Sigmoid colon (tissue), 7 donors: ENCODE measurements at regions of chr3 and their contacts with region 1.

Region 1: DNA sequence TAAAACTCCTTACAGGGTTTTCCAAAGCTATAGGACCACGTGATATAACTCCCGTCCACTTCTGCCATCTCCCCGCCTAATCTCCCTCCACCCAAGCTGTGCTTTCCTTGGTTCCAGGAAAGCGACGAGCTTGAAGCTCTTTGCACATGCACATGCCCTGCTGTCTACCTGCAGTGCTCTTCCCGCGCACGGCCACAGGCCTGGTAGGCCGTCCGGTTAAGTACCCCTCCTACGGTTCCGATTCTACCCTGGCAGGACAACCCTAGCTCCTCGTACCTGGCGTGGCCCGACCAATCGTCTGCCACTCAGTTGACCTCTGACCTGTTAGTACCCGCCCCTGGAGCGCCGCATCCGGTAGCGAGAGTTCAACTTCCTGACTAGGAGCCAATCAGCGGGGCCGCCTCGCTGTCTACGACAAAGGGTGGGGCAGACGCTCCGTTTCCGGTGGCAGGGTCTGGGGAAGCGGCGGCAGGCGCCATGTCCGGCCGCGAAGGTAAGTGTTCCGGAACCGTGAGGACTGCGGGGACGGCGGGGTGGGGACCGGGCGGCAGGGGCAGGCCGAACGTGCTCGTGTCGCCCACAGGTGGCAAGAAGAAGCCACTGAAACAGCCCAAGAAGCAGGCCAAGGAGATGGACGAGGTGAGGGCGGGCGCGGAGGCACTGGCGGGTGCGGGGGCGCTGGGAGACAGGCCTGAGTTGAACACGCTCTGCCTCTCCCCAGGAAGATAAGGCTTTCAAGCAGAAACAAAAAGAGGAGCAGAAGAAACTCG is at the starts of genes CCDC51 and TMA7:
- DNase-seq: peak; percentile 99
- H3K4me3 ChIP-seq: peak within 1 kb of the TSS; percentile 83 to 91 (median 86)
- H3K27ac ChIP-seq: peak within 1 kb of the TSS; percentile 92 to 94 (median 93)
- H3K4me1 ChIP-seq: peaks cover 0 to 38% (median 25%) of the 10 kb centered on the region in 4 donors
- H3K27me3 ChIP-seq: no peaks in the 10 kb centered on the region
- CTCF ChIP-seq: no peak
- EP300 ChIP-seq: no peak
- POLR2A ChIP-seq: peak; percentile 96 to 97
- total RNA-seq, gene CCDC51: 9.4 to 22.5 (median 13.1) TPM
- total RNA-seq, gene TMA7: 146 to 352 (median 244) TPM

Region 2: GRCh38 chr3:48194446-48195071 is 245.4 kb before region 1 on chr3:
- intact Hi-C with region 1: loop called (anchors 10 kb)
- DNase-seq: no peak
- H3K4me3 ChIP-seq: no peak overlapping the region
- H3K27ac ChIP-seq: no peak overlapping the region
- H3K4me1 ChIP-seq: no peaks in the 10 kb centered on the region
- H3K27me3 ChIP-seq: no peaks in the 10 kb centered on the region
- CTCF ChIP-seq: peak in 3 of 4 experiments; percentile 50 to 62 (median 52)
- EP300 ChIP-seq: no peak
- POLR2A ChIP-seq: no peak

Region 3: GRCh38 chr3:48232734-48233133 is 207.3 kb before region 1 on chr3:
- intact Hi-C with region 1: loop called (anchors 5 kb)
- DNase-seq: peak; percentile 78
- H3K4me3 ChIP-seq: no peak overlapping the region
- H3K27ac ChIP-seq: peak overlapping the region in 2 of 4 donors; percentile 0 to 51
- H3K4me1 ChIP-seq: peaks cover 0 to 8% (median 5%) of the 10 kb centered on the region in 4 donors
- H3K27me3 ChIP-seq: no peaks in the 10 kb centered on the region
- CTCF ChIP-seq: peak in 2 of 4 experiments; percentile 29 to 41
- EP300 ChIP-seq: no peak
- POLR2A ChIP-seq: no peak

Region 4: DNA sequence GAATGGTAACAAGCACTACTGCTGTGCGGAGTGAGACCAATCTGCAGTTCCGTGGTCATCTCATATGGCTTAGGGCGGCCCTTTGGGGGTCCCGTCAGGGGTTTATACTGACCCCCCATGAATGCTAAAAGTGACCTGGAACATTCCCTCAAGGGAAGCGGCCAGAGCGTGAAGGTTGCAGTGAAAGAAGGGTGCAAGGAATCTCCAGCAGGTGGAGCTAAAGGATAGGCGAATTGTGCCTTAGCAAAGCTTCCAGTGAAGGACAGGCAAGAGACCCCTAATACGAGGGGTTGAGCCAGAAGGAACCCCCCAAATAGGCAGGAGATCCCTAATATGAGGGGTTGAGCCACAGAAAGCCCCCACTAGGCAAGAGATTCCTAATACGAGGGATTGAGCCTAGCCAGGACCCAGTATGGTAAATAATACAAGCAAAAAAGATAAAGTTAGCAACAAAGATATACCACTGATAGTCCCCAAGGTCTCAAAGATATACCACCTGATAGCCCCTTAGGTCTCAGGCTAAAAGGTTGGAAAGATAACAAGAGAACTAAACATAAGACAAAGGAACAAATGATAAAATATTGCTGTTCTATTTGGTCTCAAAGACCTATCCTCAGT is 166.3 kb before region 1 on chr3:
- intact Hi-C with region 1: loop called (anchors 1 kb)
- DNase-seq: peak; percentile 66
- H3K4me3 ChIP-seq: no peak overlapping the region
- H3K27ac ChIP-seq: no peak overlapping the region
- H3K4me1 ChIP-seq: peaks cover 0 to 9% (median 0%) of the 10 kb centered on the region in 4 donors
- H3K27me3 ChIP-seq: no peaks in the 10 kb centered on the region
- CTCF ChIP-seq: peak; percentile 31 to 77 (median 68)
- EP300 ChIP-seq: no peak
- POLR2A ChIP-seq: no peak

Region 5: DNA sequence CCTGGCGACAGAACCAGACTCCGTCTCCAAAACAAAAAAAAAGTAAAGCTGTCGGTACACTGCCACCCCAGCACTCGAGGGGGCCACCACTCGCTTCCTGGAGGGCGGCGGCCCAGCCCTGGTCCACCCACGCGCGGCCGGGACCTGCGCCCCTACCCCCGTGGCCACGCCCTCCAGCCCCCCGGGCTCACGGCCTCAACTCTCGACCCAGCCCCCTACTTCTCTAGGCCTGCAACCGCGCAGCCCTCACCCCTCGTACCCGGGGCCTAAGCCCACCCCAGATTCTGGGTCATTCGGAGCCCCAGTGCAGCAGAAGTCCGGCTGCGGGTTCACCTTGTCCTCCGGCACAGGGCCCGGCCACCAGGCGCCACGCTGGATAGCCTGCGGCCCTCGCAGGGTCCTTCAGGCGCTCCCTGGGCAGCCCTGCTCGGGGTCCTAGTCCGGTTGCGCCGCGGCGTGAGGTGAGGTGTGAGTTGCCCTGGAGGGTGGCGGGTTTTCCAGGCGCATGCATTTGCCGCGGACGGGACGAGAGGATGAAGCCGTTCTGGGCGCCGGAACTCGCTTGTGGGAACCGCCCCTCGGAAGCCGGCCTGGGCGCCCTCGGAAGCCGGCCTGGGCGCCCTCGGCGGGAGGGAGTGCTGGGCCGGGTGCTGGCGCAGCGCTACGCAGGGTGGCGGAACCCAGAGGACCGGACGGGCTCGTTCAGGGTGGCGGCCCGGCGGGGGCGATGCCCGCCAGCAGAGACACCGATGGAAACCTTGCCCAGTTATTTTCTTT is 138.8 kb before region 1 on chr3:
- intact Hi-C with region 1: loop called (anchors 2 kb)
- DNase-seq: peak; percentile 94
- H3K4me3 ChIP-seq: peak within 1 kb of the TSS; percentile 71 to 94 (median 80)
- H3K27ac ChIP-seq: peak within 1 kb of the TSS; percentile 94 to 98 (median 97)
- H3K4me1 ChIP-seq: peaks cover 0 to 27% (median 15%) of the 10 kb centered on the region in 4 donors
- H3K27me3 ChIP-seq: no peaks in the 10 kb centered on the region
- CTCF ChIP-seq: no peak
- EP300 ChIP-seq: no peak
- POLR2A ChIP-seq: peak; percentile 36 to 71

Region 6: GRCh38 chr3:48400824-48401433 is 39.1 kb before region 1 on chr3:
- intact Hi-C with region 1: loop called (anchors 1 kb)
- DNase-seq: peak; percentile 85
- H3K4me3 ChIP-seq: no peak overlapping the region
- H3K27ac ChIP-seq: peak overlapping the region; percentile 88 to 96 (median 89)
- H3K4me1 ChIP-seq: peaks cover 0 to 28% (median 23%) of the 10 kb centered on the region in 4 donors
- H3K27me3 ChIP-seq: no peaks in the 10 kb centered on the region
- CTCF ChIP-seq: peak; percentile 83 to 96 (median 86)
- EP300 ChIP-seq: no peak
- POLR2A ChIP-seq: no peak